Endothelial cell of umbilical vein (primary cell): ENCODE measurements at regions of chr5 and their contacts with region 1.

Region 1: DNA sequence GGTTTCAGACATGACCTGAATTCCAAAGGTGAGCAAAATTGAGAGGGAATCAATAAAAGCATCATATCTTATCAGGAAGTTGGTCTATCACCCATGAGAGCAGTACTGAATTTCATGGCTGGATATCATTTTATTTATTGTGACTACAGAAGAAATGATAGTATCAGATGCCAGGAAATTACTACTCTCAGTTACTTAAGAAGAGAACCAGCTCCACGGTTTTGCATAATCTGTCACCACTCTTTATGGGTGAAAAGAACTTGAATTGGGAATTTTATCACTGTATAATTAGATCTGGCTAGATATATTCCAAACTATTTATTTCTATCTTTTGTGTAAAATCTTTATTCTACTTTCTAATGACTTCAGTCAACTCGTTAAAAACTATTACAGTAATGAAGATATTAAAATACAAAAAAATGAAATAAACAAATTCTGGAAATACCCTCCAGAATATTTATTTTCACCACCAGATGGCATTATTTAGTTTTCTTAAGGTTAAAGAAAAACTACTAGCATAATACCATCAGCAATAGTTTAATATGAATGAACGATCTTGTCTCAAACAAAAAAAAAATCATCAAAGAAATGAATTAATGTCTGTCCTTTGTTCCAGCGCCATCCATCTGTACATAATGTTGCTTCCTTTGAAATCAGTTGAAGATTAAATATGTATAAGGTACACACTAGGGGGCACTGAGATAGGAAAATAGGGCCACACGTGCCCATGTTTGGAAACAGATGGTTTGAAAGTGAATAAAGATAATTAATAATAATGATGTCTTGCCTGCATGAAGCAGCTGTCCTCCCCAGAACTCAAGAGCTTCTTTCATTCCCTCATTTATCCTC is 84.7 kb upstream of the SLCO6A1 start:
- DNase-seq: peak; percentile 43
- H3K4me3 ChIP-seq: no peak overlapping the region
- H3K27ac ChIP-seq: no peak overlapping the region
- H3K4me1 ChIP-seq: no peaks in the 10 kb centered on the region
- H3K27me3 ChIP-seq: peaks cover 7 to 8% of the 10 kb centered on the region in 2 experiments
- CTCF ChIP-seq: no peak
- POLR2A ChIP-seq: no peak

Region 2: DNA sequence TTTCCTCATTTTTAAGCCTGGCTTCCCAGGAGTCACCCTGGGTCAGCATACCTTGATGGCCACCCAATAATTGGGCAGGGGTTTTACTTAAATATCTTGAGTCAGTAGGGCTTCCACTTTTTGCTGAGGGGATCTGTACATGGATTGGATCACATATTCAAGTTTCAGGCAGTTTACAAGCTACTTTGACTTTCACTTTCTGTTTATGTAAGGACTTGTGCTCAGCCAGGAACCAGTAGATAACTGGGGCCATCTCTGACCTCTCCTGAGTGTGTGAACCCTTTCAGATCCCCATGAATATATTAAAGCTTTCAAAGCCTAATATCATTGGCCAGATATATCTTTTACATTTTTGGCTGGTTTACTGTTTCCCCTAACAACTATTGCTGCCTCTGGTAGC is 129.8 kb before region 1 on chr5:
- CTCF ChIA-PET with region 1: no interaction called
- POLR2A ChIA-PET with region 1: no interaction called
- dilution Hi-C with region 1: no loop called
- intact Hi-C with region 1: no loop called
- DNase-seq: no peak
- H3K4me3 ChIP-seq: no peak overlapping the region
- H3K27ac ChIP-seq: no peak overlapping the region
- H3K4me1 ChIP-seq: no peaks in the 10 kb centered on the region
- H3K27me3 ChIP-seq: no peaks in the 10 kb centered on the region
- CTCF ChIP-seq: no peak
- POLR2A ChIP-seq: no peak

Region 3: DNA sequence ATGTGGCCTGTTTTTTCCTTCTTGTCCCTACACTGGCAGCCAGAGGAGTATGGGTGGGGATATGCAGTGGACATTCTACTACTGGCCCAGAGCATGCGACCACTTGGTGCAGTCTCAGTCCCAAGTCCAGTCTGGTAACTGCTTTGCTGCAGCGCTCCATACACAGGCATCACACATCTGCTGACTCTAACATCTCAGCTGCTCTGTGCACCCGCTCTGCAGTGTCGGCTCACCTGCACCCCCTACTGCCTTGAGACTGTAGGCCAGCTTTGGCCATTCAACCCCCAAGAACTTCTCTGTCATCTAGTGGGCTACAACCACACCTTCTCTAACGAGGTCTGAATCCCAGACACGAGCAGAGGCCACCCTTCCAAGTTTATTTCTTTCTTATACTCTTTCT is 38.3 kb before region 1 on chr5:
- CTCF ChIA-PET with region 1: no interaction called
- POLR2A ChIA-PET with region 1: no interaction called
- dilution Hi-C with region 1: no loop called
- intact Hi-C with region 1: no loop called
- DNase-seq: peak; percentile 14
- H3K4me3 ChIP-seq: no peak overlapping the region
- H3K27ac ChIP-seq: no peak overlapping the region
- H3K4me1 ChIP-seq: no peaks in the 10 kb centered on the region
- H3K27me3 ChIP-seq: peaks cover 0 to 2% of the 10 kb centered on the region in 2 experiments
- CTCF ChIP-seq: peak; percentile 16 to 50
- POLR2A ChIP-seq: no peak

Region 4: DNA sequence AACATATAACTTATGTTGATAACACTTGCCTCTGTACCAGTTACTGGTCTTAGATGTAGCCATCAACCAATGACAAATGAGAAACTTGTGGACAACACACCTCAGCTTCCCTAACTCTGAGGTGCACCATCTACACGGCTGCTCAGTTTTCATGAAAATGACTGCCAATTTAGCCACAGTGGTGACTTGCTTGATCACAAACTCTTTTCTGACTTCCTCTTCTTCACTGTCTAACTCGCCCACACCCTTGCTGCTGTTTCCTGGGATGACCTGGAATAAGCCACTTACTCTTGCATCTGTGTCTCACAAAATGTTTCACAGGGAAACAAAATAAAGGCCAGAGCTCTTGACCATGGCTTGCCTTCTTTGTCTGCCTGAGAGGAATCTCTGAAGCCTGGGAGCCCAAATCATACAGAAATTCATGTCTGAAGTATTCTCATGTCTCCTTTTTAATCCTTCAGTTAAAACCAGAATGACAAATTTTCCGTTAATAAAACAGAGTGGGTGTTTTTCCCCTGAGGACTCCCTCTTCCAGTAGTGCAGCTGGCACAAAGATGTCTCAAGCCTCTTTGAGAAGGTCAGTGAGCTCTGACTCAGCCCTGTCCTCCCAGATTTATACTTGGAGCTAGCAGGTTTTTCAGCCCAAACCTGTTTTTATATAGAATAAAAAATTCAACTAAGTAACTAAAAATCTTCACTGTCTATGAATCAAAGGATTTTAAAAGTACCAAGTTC is 45.1 kb after region 1 on chr5:
- CTCF ChIA-PET with region 1: no interaction called
- POLR2A ChIA-PET with region 1: no interaction called
- dilution Hi-C with region 1: no loop called
- intact Hi-C with region 1: no loop called
- DNase-seq: no peak
- H3K4me3 ChIP-seq: no peak overlapping the region
- H3K27ac ChIP-seq: no peak overlapping the region
- H3K4me1 ChIP-seq: peaks cover 2% of the 10 kb centered on the region
- H3K27me3 ChIP-seq: peaks cover 0 to 4% of the 10 kb centered on the region in 2 experiments
- CTCF ChIP-seq: no peak
- POLR2A ChIP-seq: no peak

Region 5: GRCh38 chr5:102700120-102700831 is 116.8 kb after region 1 on chr5:
- CTCF ChIA-PET with region 1: no interaction called
- POLR2A ChIA-PET with region 1: no interaction called
- dilution Hi-C with region 1: no loop called
- intact Hi-C with region 1: no loop called
- DNase-seq: no peak
- H3K4me3 ChIP-seq: no peak overlapping the region
- H3K27ac ChIP-seq: no peak overlapping the region
- H3K4me1 ChIP-seq: no peaks in the 10 kb centered on the region
- H3K27me3 ChIP-seq: no peaks in the 10 kb centered on the region
- CTCF ChIP-seq: no peak
- POLR2A ChIP-seq: no peak

Region 6: DNA sequence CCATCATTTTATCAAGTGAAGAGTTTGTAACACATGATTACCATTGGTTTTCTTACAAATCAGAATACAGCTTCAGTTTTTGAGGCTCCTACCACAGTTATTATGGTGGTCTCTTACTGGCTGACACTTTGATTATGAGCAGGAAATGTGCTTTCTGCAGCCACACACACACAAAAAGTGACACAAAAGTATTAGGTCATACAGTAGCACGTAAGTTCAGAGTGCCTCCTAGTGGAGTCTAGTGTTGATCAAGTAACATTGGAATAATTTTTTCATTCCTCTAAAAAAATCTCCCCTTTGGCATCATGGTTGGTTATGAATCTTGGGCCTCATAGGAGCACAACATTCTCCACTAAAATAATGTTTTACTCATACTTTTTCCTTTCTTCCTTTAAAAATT is 209.2 kb after region 1 on chr5:
- CTCF ChIA-PET with region 1: no interaction called
- POLR2A ChIA-PET with region 1: no interaction called
- dilution Hi-C with region 1: no loop called
- intact Hi-C with region 1: loop called (anchors 1 kb)
- DNase-seq: peak; percentile 33
- H3K4me3 ChIP-seq: no peak overlapping the region
- H3K27ac ChIP-seq: no peak overlapping the region
- H3K4me1 ChIP-seq: no peaks in the 10 kb centered on the region
- H3K27me3 ChIP-seq: no peaks in the 10 kb centered on the region
- CTCF ChIP-seq: peak; percentile 17
- POLR2A ChIP-seq: no peak

Region 7: GRCh38 chr5:103041071-103041676 is 457.7 kb after region 1 on chr5:
- CTCF ChIA-PET with region 1: interaction called, 8 read pairs
- POLR2A ChIA-PET with region 1: no interaction called
- dilution Hi-C with region 1: no loop called
- intact Hi-C with region 1: loop called (anchors 1 kb)
- DNase-seq: peak; percentile 71
- H3K4me3 ChIP-seq: no peak overlapping the region
- H3K27ac ChIP-seq: no peak overlapping the region
- H3K4me1 ChIP-seq: no peaks in the 10 kb centered on the region
- H3K27me3 ChIP-seq: no peaks in the 10 kb centered on the region
- CTCF ChIP-seq: peak; percentile 8 to 30
- POLR2A ChIP-seq: no peak

Region 8: GRCh38 chr5:103139264-103139865 is 555.9 kb after region 1 on chr5:
- CTCF ChIA-PET with region 1: interaction called, 6 read pairs
- POLR2A ChIA-PET with region 1: no interaction called
- dilution Hi-C with region 1: no loop called
- intact Hi-C with region 1: loop called (anchors 1 kb)
- DNase-seq: peak; percentile 69
- H3K4me3 ChIP-seq: no peak overlapping the region
- H3K27ac ChIP-seq: no peak overlapping the region
- H3K4me1 ChIP-seq: no peaks in the 10 kb centered on the region
- H3K27me3 ChIP-seq: no peaks in the 10 kb centered on the region
- CTCF ChIP-seq: peak; percentile 82 to 89
- POLR2A ChIP-seq: no peak